Naive thymus-derived CD4-positive, alpha-beta T cell (primary cell): ENCODE measurements at regions of chr18 and their contacts with region 1.

Region 1: DNA sequence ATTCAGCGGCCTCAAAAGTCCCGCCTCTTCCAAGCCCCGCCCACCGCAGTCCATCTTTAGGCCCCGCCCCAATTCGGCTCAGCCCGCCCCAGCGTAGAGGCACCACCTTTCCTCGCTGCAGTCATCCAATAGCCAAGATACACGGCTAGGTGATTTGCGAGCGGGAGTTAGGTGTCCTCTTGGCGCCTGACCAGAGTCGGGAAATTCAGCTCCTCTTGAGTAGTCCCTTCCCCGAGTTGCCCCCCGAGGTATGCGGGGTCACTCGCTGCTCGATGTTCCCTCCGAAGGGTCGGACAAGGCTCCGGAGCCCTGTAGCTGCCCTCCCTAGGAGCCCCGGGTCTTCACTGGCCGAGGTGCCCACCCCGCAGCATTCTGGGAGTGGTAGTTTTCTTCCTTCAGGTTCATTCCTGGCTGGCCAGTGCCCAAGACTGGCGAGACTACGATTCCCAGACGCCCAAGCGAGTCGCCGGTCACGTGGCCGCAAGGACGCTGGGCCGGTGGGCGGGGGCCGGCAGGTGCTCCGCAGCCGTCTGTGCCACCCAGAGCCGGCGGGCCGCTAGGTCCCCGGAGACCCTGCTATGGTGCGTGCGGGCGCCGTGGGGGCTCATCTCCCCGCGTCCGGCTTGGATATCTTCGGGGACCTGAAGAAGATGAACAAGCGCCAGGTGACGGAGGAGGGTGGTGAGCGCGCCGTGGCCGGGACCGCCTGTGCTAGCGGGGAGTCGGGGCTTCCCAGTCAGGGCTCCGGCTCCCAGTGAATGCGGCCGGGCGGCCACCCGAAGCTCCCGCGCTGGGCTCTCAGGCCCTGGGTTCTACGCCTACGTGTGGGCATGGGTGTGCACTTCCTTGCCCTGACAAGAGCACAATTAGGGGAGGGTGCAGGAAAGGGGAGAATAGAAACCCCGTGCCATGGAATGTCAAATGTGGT is at the start of gene SEC11C:
- DNase-seq: peak; percentile 89 to 98 (median 98)
- ATAC-seq: peak; percentile 93
- H3K4me3 ChIP-seq: peak within 1 kb of the TSS; percentile 98
- H3K4me3 Mint-ChIP-seq: peak within 1 kb of the TSS; percentile 91 to 98 (median 96)
- H3K27ac ChIP-seq: peak within 1 kb of the TSS; percentile 98
- H3K27ac Mint-ChIP-seq: peak within 1 kb of the TSS; percentile 93 to 100 (median 100)
- H3K4me1 ChIP-seq: peaks cover 15 to 17% of the 10 kb centered on the region in 2 donors
- H3K4me1 Mint-ChIP-seq: peaks cover 19 to 48% (median 39%) of the 10 kb centered on the region in 7 donors
- H3K27me3 ChIP-seq: no peaks in the 10 kb centered on the region
- H3K27me3 Mint-ChIP-seq: peaks cover 2 to 16% (median 9%) of the 10 kb centered on the region in 5 donors
- total RNA-seq, gene SEC11C: 41.4 to 111 (median 53.8) TPM

Region 2: GRCh38 chr18:57586251-57587049 is 1553.2 kb before region 1 on chr18 and contains the start of gene FECH:
- CTCF ChIA-PET with region 1: no interaction called
- POLR2A ChIA-PET with region 1: no interaction called
- intact Hi-C with region 1: loop called in 1 of 2 experiments (anchors 1 kb)
- DNase-seq: peak; percentile 59 to 81 (median 73)
- ATAC-seq: peak; percentile 98
- H3K4me3 ChIP-seq: peak within 1 kb of the TSS; percentile 61
- H3K4me3 Mint-ChIP-seq: peak within 1 kb of the TSS; percentile 81 to 95 (median 89)
- H3K27ac ChIP-seq: peak within 1 kb of the TSS; percentile 75
- H3K27ac Mint-ChIP-seq: peak within 1 kb of the TSS; percentile 65 to 90 (median 83)
- H3K4me1 ChIP-seq: peaks cover 9 to 11% of the 10 kb centered on the region in 2 donors
- H3K4me1 Mint-ChIP-seq: peaks cover 10 to 35% (median 23%) of the 10 kb centered on the region in 7 donors
- H3K27me3 ChIP-seq: no peaks in the 10 kb centered on the region
- H3K27me3 Mint-ChIP-seq: no peaks in the 10 kb centered on the region
- total RNA-seq, gene FECH: 11.7 to 15.3 (median 13.5) TPM

Region 3: DNA sequence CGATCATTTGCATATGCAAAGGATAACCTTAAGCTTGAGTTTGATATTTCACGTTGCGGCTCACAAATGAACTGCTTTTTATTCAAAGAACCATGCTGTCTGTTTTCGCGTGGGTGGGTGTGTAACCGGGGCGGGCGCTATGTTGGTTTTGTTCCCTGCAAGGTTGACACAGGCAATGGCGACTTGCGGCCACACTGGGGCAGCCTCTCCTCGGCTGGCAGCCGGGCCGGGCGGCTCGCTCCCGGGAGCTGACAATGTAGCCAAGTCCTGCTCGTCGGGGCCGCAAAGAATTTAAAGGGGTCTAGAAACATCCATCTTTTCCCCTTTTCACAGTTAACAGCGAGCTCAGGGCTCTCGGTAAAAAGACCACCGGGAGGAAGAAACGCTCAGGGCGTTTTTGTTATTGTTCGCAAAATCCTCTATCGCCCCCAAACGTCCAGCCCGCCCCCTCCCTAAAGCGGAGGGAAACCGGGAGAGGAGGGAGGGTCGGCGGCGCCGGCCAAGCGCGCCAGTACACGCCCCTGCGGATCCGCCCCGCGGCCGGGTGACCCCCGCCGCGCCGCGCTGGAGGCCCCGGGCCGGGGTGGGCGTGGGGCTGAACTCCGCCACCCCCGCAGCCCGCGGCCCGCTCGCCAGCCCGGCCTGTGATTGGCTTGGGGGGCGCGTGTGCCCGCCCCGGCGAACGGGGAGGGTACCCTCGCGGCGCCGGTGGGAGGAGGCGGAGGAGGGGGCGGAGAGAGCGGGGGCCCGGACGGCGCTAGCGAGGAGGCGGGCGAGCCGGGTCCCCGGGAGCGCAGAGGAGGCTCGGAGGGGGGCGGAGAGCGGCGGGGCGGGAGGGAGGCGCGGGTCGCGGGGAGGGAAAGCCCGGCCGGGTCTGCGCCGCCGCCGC is 1095.9 kb before region 1 on chr18 and contains the start of gene NEDD4L:
- CTCF ChIA-PET with region 1: no interaction called
- POLR2A ChIA-PET with region 1: no interaction called
- intact Hi-C with region 1: loop called in 1 of 2 experiments (anchors 1 kb)
- DNase-seq: peak; percentile 55 to 78 (median 73)
- ATAC-seq: peak; percentile 88
- H3K4me3 ChIP-seq: peak within 1 kb of the TSS; percentile 69
- H3K4me3 Mint-ChIP-seq: peak within 1 kb of the TSS; percentile 88 to 96 (median 93)
- H3K27ac ChIP-seq: peak within 1 kb of the TSS; percentile 54
- H3K27ac Mint-ChIP-seq: peak within 1 kb of the TSS; percentile 34 to 89 (median 70)
- H3K4me1 ChIP-seq: peaks cover 0 to 8% of the 10 kb centered on the region in 2 donors
- H3K4me1 Mint-ChIP-seq: peaks cover 18 to 30% (median 25%) of the 10 kb centered on the region in 7 donors
- H3K27me3 ChIP-seq: no peaks in the 10 kb centered on the region
- H3K27me3 Mint-ChIP-seq: peaks cover 0 to 57% (median 0%) of the 10 kb centered on the region in 5 donors
- total RNA-seq, gene NEDD4L: 3.7 to 10.3 (median 4.2) TPM

Region 4: DNA sequence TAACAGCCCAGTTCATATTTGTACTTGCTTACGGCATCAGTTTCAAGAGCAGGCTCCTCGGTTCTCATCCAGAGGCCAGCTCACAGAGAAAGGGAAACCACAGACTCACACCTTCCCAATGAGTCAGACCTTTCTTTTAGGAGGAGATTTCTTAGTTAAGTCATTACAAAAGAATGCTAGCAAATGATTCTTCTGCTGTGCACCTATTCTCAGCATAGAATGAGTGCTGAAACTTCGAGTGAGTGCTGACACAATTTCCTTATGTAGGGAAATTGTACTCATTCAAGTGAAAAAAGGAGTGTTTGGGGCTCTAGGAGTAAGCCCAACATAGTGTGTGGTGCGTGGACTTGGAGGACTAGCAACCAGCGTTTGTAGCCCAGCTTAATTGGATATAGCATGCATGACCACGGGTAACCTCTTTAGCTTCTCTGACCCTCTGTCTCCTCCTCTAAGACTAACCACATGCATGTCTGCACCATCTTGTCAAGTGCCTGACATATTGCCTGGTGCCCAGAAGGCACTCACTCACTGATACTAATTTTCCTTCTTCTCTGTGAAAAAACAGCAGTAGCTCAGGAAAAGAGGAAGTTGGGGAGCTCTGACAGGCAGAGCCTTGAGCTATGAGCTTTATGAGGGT is 597.7 kb before region 1 on chr18:
- CTCF ChIA-PET with region 1: no interaction called
- POLR2A ChIA-PET with region 1: no interaction called
- intact Hi-C with region 1: loop called in 1 of 2 experiments (anchors 5 kb)
- DNase-seq: peak in 1 of 9 donors; percentile 52
- ATAC-seq: peak; percentile 79
- H3K4me3 ChIP-seq: no peak overlapping the region
- H3K4me3 Mint-ChIP-seq: peak overlapping the region in 1 of 10 donors; percentile 23
- H3K27ac ChIP-seq: no peak overlapping the region
- H3K27ac Mint-ChIP-seq: peak overlapping the region in 1 of 9 donors; percentile 29
- H3K4me1 ChIP-seq: peaks cover 7 to 14% of the 10 kb centered on the region in 2 donors
- H3K4me1 Mint-ChIP-seq: peaks cover 23 to 59% (median 40%) of the 10 kb centered on the region in 7 donors
- H3K27me3 ChIP-seq: no peaks in the 10 kb centered on the region
- H3K27me3 Mint-ChIP-seq: peaks cover 0 to 41% (median 0%) of the 10 kb centered on the region in 5 donors

Region 5: GRCh38 chr18:58687871-58688308 is 451.7 kb before region 1 on chr18:
- CTCF ChIA-PET with region 1: no interaction called
- POLR2A ChIA-PET with region 1: no interaction called
- intact Hi-C with region 1: loop called in 1 of 2 experiments (anchors 5 kb)
- DNase-seq: peak in 8 of 9 donors; percentile 66 to 91 (median 86)
- ATAC-seq: peak; percentile 97
- H3K4me3 ChIP-seq: peak overlapping the region; percentile 15
- H3K4me3 Mint-ChIP-seq: peak overlapping the region; percentile 47 to 93 (median 87)
- H3K27ac ChIP-seq: peak overlapping the region; percentile 68
- H3K27ac Mint-ChIP-seq: peak overlapping the region in 8 of 9 donors; percentile 92 to 99 (median 96)
- H3K4me1 ChIP-seq: peaks cover 35 to 72% of the 10 kb centered on the region in 2 donors
- H3K4me1 Mint-ChIP-seq: peaks cover 43 to 89% (median 82%) of the 10 kb centered on the region in 7 donors
- H3K27me3 ChIP-seq: no peaks in the 10 kb centered on the region
- H3K27me3 Mint-ChIP-seq: no peaks in the 10 kb centered on the region

Region 6: GRCh38 chr18:59172664-59173249 is 33.1 kb after region 1 on chr18:
- CTCF ChIA-PET with region 1: no interaction called
- POLR2A ChIA-PET with region 1: no interaction called
- intact Hi-C with region 1: no loop called
- DNase-seq: no peak
- ATAC-seq: no peak
- H3K4me3 ChIP-seq: no peak overlapping the region
- H3K4me3 Mint-ChIP-seq: no peak overlapping the region
- H3K27ac ChIP-seq: no peak overlapping the region
- H3K27ac Mint-ChIP-seq: peak overlapping the region in 1 of 9 donors; percentile 20
- H3K4me1 ChIP-seq: no peaks in the 10 kb centered on the region
- H3K4me1 Mint-ChIP-seq: no peaks in the 10 kb centered on the region
- H3K27me3 ChIP-seq: no peaks in the 10 kb centered on the region
- H3K27me3 Mint-ChIP-seq: peaks cover 13 to 19% (median 19%) of the 10 kb centered on the region in 5 donors

Region 7: GRCh38 chr18:59268721-59269562 is 129.3 kb after region 1 on chr18:
- CTCF ChIA-PET with region 1: no interaction called
- POLR2A ChIA-PET with region 1: no interaction called
- intact Hi-C with region 1: loop called in 1 of 2 experiments (anchors 2 kb)
- DNase-seq: peak in 1 of 9 donors; percentile 61
- ATAC-seq: peak; percentile 40
- H3K4me3 ChIP-seq: no peak overlapping the region
- H3K4me3 Mint-ChIP-seq: peak overlapping the region in 7 of 10 donors; percentile 36 to 83 (median 71)
- H3K27ac ChIP-seq: no peak overlapping the region
- H3K27ac Mint-ChIP-seq: no peak overlapping the region
- H3K4me1 ChIP-seq: no peaks in the 10 kb centered on the region
- H3K4me1 Mint-ChIP-seq: peaks cover 16 to 54% (median 27%) of the 10 kb centered on the region in 7 donors
- H3K27me3 ChIP-seq: peaks cover 7% of the 10 kb centered on the region in 2 donors
- H3K27me3 Mint-ChIP-seq: peaks cover 64 to 86% (median 71%) of the 10 kb centered on the region in 5 donors

Region 8: DNA sequence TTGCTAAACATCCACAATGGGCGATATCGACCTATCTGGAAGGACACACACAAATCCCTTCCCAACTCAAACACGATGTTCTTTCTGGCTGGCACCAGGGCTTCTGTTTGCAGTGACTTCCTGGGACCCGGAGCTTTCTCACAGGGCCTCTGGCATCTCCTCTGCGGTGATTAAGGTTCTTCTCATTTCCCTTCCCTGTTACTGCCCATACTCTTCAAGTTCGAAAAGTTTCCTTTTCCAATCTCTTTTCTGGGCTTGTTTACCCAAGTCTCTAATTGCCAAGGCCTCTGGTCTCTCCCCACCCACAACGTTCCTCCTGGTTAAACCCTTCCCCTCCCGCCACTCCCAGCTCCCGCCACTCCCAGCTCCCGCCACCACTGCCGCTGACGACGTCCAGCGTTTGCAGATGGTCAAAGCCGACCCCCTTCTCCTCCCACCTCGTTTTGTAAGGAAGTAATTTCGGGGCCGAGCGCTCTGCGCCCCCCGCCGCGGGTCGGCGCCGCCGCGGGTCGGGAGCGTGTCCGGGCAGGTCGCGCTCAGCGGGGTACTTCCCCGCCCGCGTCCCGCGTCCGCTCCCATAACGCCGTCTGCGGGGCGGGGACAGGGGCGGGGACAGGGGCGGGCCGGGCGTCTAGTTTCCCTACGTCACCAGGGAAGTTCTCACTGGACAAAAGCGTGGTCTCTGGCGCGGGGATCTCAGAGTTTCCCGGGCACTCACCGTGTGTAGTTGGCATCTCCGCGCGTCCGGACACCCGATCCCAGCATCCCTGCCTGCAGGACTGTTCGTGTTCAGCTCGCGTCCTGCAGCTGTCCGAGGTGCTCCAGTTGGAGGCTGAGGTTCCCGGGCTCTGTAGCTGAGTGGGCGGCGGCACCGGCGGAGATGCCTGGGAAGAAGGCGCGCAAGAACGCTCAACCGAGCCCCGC is 759.9 kb after region 1 on chr18 and contains the start of gene PMAIP1:
- CTCF ChIA-PET with region 1: no interaction called
- POLR2A ChIA-PET with region 1: no interaction called
- intact Hi-C with region 1: loop called in 1 of 2 experiments (anchors 1 kb)
- DNase-seq: peak; percentile 60 to 87 (median 69)
- ATAC-seq: peak; percentile 91
- H3K4me3 ChIP-seq: peak within 1 kb of the TSS; percentile 66
- H3K4me3 Mint-ChIP-seq: peak within 1 kb of the TSS; percentile 92 to 99 (median 98)
- H3K27ac ChIP-seq: peak within 1 kb of the TSS; percentile 86
- H3K27ac Mint-ChIP-seq: peak within 1 kb of the TSS; percentile 88 to 95 (median 94)
- H3K4me1 ChIP-seq: peaks cover 14 to 21% of the 10 kb centered on the region in 2 donors
- H3K4me1 Mint-ChIP-seq: peaks cover 22 to 52% (median 34%) of the 10 kb centered on the region in 7 donors
- H3K27me3 ChIP-seq: no peaks in the 10 kb centered on the region
- H3K27me3 Mint-ChIP-seq: no peaks in the 10 kb centered on the region
- total RNA-seq, gene PMAIP1: 5.8 to 95.1 (median 22.8) TPM